ENCODE measurements at regions of chr14 and their contacts with region 1.

Region 1: DNA sequence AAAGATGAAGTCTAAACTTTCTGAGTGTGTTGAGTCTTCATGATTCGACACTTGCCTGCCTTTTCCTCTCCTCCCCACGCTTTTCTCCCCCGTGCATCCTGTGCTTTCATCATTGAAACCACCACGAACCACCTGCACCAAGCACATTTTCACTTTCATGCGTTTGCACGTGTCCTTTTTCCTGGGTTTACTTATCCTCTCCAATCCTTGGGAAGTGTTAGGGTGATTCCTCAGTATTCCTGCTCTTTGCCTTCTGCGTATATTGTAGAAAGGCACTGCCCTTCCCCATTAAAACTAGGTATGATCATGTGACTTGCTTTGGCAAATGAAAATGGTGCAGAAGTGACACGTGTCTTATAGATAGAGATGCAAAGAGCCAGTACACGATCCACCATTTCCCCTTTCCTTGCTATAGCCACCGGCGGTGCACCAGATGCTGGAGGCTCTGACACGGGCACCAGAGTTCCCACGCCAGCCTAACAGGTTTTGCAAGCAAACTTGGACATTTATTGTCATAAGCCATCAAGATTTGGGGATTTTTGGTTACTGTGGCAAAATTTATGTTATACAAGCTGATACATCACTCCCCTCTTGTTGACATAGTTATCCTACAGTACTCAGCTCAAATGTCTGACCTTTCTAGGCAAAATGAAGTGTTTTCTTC is 106.7 kb downstream of the BRMS1L start:
- DNase-seq: peak; percentile 74
- H3K4me3 Mint-ChIP-seq: peak overlapping the region; percentile 52
- H3K27ac Mint-ChIP-seq: peak overlapping the region; percentile 20
- H3K4me1 Mint-ChIP-seq: peaks cover 31% of the 10 kb centered on the region
- H3K27me3 Mint-ChIP-seq: no peaks in the 10 kb centered on the region

Region 2: GRCh38 chr14:36105401-36105800 is 172.6 kb after region 1 on chr14:
- CTCF ChIA-PET with region 1: no interaction called
- intact Hi-C with region 1: no loop called
- DNase-seq: no peak
- H3K4me3 Mint-ChIP-seq: no peak overlapping the region
- H3K27ac Mint-ChIP-seq: no peak overlapping the region
- H3K4me1 Mint-ChIP-seq: no peaks in the 10 kb centered on the region
- H3K27me3 Mint-ChIP-seq: peaks cover 25% of the 10 kb centered on the region

Region 3: GRCh38 chr14:36320200-36320896 is 387.6 kb after region 1 on chr14 and contains the start of gene MBIP:
- CTCF ChIA-PET with region 1: no interaction called
- intact Hi-C with region 1: loop called (anchors 2 kb)
- DNase-seq: peak; percentile 98
- H3K4me3 Mint-ChIP-seq: peak within 1 kb of the TSS; percentile 97
- H3K27ac Mint-ChIP-seq: peak within 1 kb of the TSS; percentile 96
- H3K4me1 Mint-ChIP-seq: peaks cover 27% of the 10 kb centered on the region
- H3K27me3 Mint-ChIP-seq: peaks cover 5% of the 10 kb centered on the region
- total RNA-seq, gene MBIP: 29.9 to 30.8 TPM